ENCODE measurements at regions of chr7 and their contacts with region 1.

Region 1: DNA sequence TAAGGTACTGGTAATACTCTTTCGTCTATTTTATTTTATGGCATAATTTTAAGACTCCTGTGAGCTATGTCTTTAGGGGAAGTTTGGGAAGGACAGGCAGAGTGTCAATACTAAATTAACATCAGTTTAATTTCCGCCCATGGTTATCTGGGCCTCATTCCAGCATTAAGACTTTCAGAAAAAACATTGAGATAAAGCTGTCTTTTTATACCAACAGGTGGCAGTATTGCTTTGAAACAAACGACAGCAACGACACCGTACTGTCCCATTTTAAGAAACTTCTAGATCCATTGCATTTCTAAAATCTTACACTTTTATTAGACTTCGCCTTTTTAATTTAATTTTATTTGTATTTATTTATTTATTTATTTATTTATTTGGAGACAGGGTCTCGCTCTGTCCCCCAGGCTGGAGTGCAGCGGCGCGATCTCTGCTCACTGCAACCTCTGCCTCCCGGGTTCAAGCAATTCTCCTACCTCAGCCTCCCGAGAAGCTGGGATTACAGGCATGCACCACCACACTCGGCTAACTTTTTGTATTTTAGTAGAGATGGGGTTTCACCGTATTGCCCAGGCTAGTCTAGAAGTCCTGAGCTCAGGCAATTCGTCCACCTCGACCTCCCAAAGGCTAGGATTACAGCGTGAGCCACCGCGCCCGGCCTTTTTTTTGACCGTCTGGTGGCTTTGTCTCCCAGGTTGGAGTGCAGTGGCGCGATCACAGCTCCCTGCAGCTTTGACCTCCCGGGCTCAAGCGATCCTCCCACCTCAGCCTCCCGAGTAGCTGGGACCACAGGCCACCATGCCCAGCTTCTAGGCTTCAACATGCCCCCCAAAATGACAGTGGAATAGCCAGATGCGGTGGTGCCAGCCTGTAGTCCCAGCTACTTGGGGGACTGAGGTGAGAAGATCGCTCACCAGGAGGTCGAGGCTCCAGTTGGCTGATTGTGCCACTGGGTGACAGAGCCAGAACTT is 78.7 kb upstream of the C1GALT1 start:
- DNase-seq: peak in 1 of 10 donors; percentile 61

Region 2: DNA sequence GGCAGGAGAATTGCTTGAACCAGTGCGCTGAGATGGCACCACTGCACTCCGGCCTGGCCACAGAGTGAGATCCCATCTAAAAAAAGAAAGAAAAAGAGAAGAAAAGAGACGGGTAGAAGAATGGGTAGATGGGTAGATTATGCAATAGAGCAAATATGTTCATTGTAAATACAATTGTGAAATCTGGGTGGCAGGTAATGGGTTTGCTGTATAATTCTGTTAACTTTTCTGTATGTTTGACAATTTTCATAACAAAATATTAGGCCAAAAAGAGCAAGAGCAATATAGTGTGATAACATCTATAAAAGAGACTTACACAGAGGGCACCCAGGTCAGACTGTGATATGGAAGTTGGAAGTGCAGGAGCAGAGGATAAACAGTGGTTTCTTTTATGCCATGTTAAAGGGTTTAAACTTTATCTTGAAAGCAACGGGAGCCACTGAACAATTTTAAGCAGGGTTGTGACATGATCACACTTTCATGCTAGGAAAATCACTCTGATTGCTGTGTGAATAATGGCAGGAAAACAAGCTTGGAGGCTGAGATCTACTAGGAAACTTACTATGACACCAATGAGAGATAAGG is 438.7 kb after region 1 on chr7:
- intact Hi-C with region 1: loop called (anchors 5 kb)
- DNase-seq: peak in 1 of 10 donors; percentile 31